ENCODE measurements at regions of chr14 and their contacts with region 1.

Region 1: DNA sequence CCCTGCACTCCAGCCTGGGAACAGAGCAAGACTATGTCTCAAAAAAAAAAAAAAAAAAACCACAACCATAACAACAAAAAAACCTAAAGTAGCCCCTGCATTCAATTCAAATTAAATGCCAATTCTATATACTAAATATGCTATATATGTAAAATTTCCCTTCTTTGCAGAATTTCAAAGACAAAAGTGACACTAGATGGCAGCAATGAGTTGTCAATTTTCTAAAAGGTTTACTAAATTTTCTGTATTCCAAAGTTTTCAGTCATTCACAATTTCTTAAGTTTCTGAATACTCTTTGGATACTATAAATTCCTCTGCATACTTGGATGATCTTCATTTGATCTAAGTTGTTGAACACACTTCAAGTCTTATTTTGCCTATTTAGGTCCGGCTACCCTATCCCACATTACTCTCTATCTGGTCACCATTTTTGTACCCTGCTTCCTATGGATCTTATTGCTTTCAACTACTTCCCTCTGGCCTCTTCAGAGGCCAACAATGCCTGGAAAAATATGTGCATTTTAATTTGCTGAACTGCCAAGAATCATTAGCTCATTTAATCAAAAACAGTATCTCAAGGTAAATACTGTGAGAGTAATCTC is 27.9 kb downstream of the HNRNPC start:
- DNase-seq: peak; percentile 14
- H3K4me3 ChIP-seq: no peak overlapping the region
- CTCF ChIP-seq: peak; percentile 14

Region 2: DNA sequence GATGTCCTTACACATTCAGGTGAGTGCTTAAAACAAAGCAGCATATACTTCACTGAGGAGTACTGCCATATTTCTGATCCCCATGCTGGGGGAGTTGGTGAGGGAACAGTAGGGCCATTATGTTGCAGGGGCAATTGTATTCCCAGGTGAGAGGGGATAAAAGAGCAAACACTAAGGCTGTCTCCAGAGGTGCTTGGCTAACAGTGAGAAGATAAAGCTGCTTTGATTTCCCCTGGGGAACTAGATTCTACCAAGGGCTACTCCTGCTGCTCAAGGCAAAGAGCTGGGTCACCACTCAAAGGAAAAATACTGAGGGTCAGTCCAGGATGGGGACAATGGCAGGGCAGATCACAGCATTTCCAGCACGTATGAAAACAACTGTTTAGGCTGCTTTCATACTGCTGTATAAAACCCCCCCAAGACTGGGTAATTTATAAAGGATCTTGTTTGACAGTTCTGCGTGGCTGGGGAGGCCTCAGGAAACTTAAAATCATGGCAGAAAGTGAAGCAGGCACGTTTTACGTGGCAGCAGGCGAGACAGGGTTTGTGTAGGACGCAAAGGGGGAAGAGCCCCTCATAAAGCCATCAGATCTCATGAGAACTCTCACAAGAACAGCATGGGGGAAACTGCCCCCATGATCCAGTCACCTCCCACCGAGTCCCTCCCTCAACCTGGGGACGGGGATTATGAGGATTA is 37.7 kb before region 1 on chr14:
- CTCF ChIA-PET with region 1: no interaction called
- POLR2A ChIA-PET with region 1: no interaction called
- DNase-seq: no peak
- H3K4me3 ChIP-seq: no peak overlapping the region
- CTCF ChIP-seq: no peak

Region 3: GRCh38 chr14:21257394-21257909 is 16.1 kb after region 1 on chr14:
- CTCF ChIA-PET with region 1: interaction called, 39 read pairs
- POLR2A ChIA-PET with region 1: interaction called, 4 read pairs
- DNase-seq: no peak
- H3K4me3 ChIP-seq: no peak overlapping the region
- CTCF ChIP-seq: no peak

Measured in AG04449 (cell line).